ENCODE measurements at regions of chr2 and their contacts with region 1.

Region 1: DNA sequence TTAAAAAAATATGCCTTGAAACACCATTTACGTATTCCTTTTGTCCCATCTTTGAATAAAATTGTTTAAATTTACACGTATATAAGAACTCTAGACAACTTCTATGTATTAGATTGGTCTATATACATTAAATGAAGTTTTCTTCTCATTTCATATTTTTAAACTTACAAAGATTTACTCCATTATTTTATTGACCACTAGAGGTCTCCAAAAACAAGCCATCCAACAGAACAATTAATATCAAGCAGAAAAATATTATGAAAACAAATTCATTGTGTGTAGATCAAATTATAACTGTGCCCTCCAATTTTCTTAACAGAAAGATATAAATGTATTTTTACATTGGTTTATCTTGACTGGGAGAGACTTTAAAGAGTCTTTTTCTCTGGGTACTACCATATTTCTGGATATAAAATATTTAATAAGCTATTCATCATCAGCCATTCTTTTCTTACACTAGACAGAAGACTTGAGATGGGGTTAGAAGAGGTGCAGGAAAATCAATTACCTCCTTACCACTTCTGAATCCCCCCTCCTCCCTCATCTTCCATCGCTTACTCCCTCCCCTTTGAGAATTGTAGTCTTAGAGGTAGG is 66.5 kb downstream of the DPP4 start:
- DNase-seq: no peak
- H3K4me3 ChIP-seq: no peak overlapping the region
- H3K4me3 Mint-ChIP-seq: no peak overlapping the region
- H3K27ac Mint-ChIP-seq: no peak overlapping the region
- H3K4me1 ChIP-seq: no peaks in the 10 kb centered on the region
- H3K4me1 Mint-ChIP-seq: peaks cover 11% of the 10 kb centered on the region
- H3K27me3 ChIP-seq: no peaks in the 10 kb centered on the region
- H3K27me3 Mint-ChIP-seq: no peaks in the 10 kb centered on the region
- CTCF ChIP-seq: peak; percentile 39 to 63

Region 2: GRCh38 chr2:161962160-161962559 is 45.4 kb before region 1 on chr2:
- CTCF ChIA-PET with region 1: no interaction called
- POLR2A ChIA-PET with region 1: no interaction called
- intact Hi-C with region 1: loop called (anchors 1 kb)
- DNase-seq: no peak
- H3K4me3 ChIP-seq: no peak overlapping the region
- H3K4me3 Mint-ChIP-seq: no peak overlapping the region
- H3K27ac Mint-ChIP-seq: no peak overlapping the region
- H3K4me1 ChIP-seq: no peaks in the 10 kb centered on the region
- H3K4me1 Mint-ChIP-seq: no peaks in the 10 kb centered on the region
- H3K27me3 ChIP-seq: no peaks in the 10 kb centered on the region
- H3K27me3 Mint-ChIP-seq: peaks cover 5% of the 10 kb centered on the region
- CTCF ChIP-seq: no peak

Region 3: DNA sequence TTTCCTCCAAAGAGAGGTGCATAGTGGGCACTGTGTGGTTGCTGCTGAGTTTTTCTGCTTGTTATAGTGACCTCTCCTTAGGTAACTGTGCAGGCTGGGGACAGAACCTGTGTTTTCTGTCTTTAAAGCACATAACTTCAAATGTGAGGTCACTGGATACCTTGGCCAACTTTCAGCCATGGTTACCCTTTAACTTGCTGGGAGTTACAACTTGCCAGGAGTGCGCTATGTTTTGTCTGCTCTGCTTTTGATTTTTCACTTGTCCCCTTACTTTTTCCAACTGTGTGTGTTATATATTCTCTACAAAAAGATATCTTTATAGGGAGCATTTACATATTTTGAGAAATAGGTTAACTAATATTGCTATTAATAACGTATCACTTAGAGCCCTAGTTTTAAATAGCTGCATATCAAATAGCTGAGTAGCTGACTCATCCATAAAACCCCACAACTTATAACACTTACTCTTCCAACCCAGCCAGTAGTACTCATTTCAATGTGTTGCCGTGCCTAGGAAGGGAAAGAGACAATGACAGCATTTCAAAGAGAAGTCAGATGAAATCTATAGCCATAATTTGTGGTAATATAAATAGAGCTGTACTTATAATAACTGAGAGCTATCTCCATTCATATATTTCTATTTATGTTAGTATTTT is 14.9 kb after region 1 on chr2:
- CTCF ChIA-PET with region 1: no interaction called
- POLR2A ChIA-PET with region 1: no interaction called
- intact Hi-C with region 1: no loop called
- DNase-seq: no peak
- H3K4me3 ChIP-seq: no peak overlapping the region
- H3K4me3 Mint-ChIP-seq: no peak overlapping the region
- H3K27ac Mint-ChIP-seq: no peak overlapping the region
- H3K4me1 ChIP-seq: no peaks in the 10 kb centered on the region
- H3K4me1 Mint-ChIP-seq: peaks cover 7% of the 10 kb centered on the region
- H3K27me3 ChIP-seq: no peaks in the 10 kb centered on the region
- H3K27me3 Mint-ChIP-seq: no peaks in the 10 kb centered on the region
- CTCF ChIP-seq: no peak

Measured in Caco-2 (cell line).